Heart left ventricle (tissue), 16 donors: ENCODE measurements at regions of chr19 and their contacts with region 1.

Region 1: DNA sequence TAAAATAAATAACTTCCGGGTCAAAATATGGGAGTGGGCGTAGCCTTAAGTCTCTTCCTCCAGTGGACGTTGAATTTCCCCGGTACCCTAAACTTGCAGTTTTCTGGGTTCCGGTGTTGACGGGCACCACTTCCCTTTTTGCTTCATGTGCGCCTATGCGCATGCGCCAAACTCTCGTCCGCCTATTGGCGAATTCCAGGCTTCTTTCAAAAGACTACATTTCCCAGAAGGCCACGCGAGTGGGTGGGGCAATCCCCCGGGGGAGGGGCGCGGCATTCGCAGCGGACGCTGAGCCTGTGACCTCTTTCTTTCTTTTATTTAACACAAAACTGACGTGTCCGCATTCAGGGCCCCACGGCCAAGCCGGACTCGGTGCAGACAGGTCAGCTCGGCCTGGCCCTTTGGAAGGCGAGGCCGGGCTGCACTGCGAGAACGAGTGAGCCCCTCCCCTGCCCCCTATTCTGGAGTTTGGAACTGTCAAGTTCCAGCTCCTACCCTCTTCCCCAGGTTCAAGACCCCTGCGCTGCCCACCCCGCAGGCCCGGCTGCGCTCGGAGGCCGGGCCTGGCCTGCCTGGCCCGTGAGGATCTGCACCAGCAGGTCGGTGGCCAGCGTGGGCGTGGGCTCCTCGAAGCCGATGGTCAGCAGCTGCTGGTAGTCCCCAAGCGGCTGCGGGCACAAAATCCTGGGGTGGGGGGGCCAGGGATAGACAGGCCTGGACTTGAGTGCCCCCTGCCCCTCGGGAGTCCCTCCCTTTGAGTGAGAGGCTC is 4.1 kb downstream of the C19orf67 start:
- DNase-seq: peak; percentile 98 to 100 (median 99)
- ATAC-seq: peak; percentile 92 to 98 (median 94)
- H3K4me3 ChIP-seq: peak overlapping the region; percentile 27 to 95 (median 72)
- H3K27ac ChIP-seq: peak overlapping the region; percentile 81 to 97 (median 92)
- H3K4me1 ChIP-seq: peaks cover 4 to 31% (median 17%) of the 10 kb centered on the region in 12 donors
- H3K27me3 ChIP-seq: no peaks in the 10 kb centered on the region
- CTCF ChIP-seq: no peak
- POLR2A ChIP-seq: peak in 1 of 2 donors; percentile 85

Region 2: DNA sequence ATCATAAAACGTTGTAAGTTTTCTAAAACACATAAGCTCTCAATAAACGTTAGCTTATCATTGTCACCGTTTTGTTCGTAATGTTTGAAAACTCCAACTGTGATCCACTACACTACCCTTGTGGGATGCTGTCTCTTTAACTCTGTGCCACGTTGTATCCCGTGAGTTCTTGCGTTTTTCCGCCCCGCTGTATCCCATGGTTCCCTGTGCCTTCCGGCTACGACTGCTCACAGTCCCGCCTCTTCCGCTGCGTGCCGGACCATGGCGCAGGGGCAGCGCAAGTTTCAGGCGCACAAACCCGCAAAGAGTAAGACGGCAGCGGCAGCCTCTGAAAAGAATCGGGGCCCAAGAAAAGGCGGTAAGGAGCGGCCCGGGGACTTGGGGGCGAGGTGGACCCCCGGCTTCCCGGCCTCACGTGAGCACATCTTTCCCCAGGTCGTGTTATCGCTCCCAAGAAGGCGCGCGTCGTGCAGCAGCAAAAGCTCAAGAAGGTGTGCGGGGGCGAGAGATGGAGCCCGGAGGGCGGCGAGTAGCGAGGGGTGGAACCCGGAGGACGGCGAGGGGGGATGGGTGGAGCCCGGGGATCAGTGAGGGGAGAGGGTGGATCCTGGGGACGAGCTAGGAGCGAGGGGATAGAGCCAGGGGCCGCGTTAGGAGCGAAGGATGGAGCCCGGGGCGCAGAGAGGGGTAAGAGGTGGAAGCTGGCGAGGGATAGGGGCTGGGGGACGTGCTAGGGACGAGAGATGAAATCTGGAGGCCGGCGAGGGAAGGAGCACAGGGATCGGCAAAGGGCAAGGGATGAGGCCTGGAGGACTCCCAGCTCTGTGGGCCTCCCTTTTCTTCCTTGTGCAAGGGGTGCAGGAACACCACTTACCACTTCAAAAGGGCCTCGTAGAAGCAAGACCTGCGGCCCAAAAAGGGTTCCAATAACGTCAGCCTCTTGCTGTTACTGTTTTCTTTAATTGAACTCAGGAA is 307.0 kb before region 1 on chr19 and contains the start of gene C19orf53:
- intact Hi-C with region 1: loop called in 1 of 10 experiments (anchors 10 kb)
- DNase-seq: peak; percentile 90 to 94 (median 92)
- ATAC-seq: peak; percentile 97 to 99 (median 98)
- H3K4me3 ChIP-seq: peak within 1 kb of the TSS; percentile 65 to 99 (median 85)
- H3K27ac ChIP-seq: peak within 1 kb of the TSS; percentile 8 to 92 (median 86)
- H3K4me1 ChIP-seq: peaks cover 4 to 22% (median 14%) of the 10 kb centered on the region in 12 donors
- H3K27me3 ChIP-seq: no peaks in the 10 kb centered on the region
- CTCF ChIP-seq: no peak
- POLR2A ChIP-seq: peak in 1 of 2 donors; percentile 82
- total RNA-seq, gene C19orf53: 79.3 to 435 (median 97.5) TPM

Region 3: GRCh38 chr19:14117668-14118164 is 36.2 kb after region 1 on chr19 and contains the start of gene PRKACA:
- intact Hi-C with region 1: loop called in 3 of 10 experiments (anchors 5 kb)
- DNase-seq: peak; percentile 99 to 100 (median 100)
- ATAC-seq: peak; percentile 87 to 94 (median 92)
- H3K4me3 ChIP-seq: peak within 1 kb of the TSS; percentile 52 to 98 (median 92)
- H3K27ac ChIP-seq: peak within 1 kb of the TSS; percentile 93 to 100 (median 99)
- H3K4me1 ChIP-seq: peaks cover 27 to 67% (median 58%) of the 10 kb centered on the region in 12 donors
- H3K27me3 ChIP-seq: no peaks in the 10 kb centered on the region
- CTCF ChIP-seq: no peak
- POLR2A ChIP-seq: peak in 1 of 2 donors; percentile 72
- total RNA-seq, gene PRKACA: 216 to 554 (median 459) TPM